Naive thymus-derived CD4-positive, alpha-beta T cell (primary cell): ENCODE measurements at regions of chr1 and their contacts with region 1.

Region 1: GRCh38 chr1:193417945-193418744 is 231.7 kb upstream of the B3GALT2 start:
- DNase-seq: peak in 7 of 9 donors; percentile 16 to 64 (median 47)
- ATAC-seq: peak; percentile 81
- H3K4me3 ChIP-seq: peak overlapping the region; percentile 45
- H3K4me3 Mint-ChIP-seq: peak overlapping the region; percentile 68 to 93 (median 87)
- H3K27ac ChIP-seq: peak overlapping the region; percentile 58
- H3K27ac Mint-ChIP-seq: peak overlapping the region; percentile 88 to 95 (median 91)
- H3K4me1 ChIP-seq: peaks cover 16 to 19% of the 10 kb centered on the region in 2 donors
- H3K4me1 Mint-ChIP-seq: peaks cover 15 to 57% (median 46%) of the 10 kb centered on the region in 7 donors
- H3K27me3 ChIP-seq: no peaks in the 10 kb centered on the region
- H3K27me3 Mint-ChIP-seq: no peaks in the 10 kb centered on the region

Region 2: DNA sequence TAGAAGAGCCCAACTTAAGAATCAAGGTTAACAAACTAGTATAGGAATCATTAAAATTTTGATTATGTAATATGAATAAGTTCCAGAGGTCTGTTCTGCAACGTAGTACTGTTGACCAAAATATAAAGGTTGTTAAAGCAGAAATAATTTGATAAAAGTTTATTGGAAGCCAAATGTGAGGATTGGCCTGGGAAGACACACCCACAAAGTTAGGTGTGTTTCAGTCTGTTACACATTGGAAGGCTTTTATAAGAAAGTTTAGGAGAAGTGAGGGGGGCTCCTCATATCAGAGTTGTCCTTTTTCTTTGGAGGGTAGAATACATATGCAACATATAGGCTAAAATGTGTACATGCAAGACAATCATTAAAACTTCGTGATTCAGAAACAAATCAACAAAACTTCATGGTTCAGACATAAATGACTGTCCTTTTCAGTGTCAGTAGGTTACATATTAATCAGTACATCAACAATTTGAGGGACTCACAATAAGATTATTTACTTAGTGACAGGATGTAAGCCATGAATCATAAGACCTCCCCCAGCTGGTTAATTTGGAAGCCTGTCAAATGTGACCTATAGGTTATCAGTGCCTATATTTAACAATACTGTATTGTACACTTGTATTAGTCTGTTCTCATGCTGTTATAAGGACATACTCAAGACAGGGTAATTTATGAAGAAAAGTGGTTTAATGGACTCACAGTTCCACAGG is 13.3 kb after region 1 on chr1:
- CTCF ChIA-PET with region 1: no interaction called
- POLR2A ChIA-PET with region 1: no interaction called
- intact Hi-C with region 1: loop called in 1 of 2 experiments (anchors 1 kb)
- DNase-seq: no peak
- ATAC-seq: no peak
- H3K4me3 ChIP-seq: no peak overlapping the region
- H3K4me3 Mint-ChIP-seq: no peak overlapping the region
- H3K27ac ChIP-seq: no peak overlapping the region
- H3K27ac Mint-ChIP-seq: peak overlapping the region in 1 of 9 donors; percentile 6
- H3K4me1 ChIP-seq: no peaks in the 10 kb centered on the region
- H3K4me1 Mint-ChIP-seq: peaks cover 0 to 22% (median 9%) of the 10 kb centered on the region in 7 donors
- H3K27me3 ChIP-seq: no peaks in the 10 kb centered on the region
- H3K27me3 Mint-ChIP-seq: no peaks in the 10 kb centered on the region

Region 3: DNA sequence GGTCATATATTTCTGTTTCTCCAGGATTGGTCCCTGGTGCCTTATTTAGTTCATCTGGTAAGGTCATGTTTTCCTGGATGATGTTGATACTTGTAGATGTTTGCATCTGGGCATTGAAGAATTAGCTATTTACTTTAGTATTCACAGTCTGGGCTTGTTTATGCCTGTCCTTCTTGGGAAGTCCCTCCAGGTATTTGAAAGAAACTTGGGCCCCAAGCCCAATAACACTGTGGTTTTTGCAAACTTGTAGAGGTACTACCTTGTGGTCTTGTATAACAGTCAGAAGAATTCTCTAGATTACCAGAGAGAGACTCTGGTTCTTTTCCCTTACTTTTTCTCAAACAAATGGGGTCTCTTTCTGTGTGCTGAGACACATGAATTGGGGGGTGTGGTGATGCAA is 19.6 kb after region 1 on chr1:
- CTCF ChIA-PET with region 1: no interaction called
- POLR2A ChIA-PET with region 1: no interaction called
- intact Hi-C with region 1: loop called (anchors 1 to 2 kb)
- DNase-seq: no peak
- ATAC-seq: peak; percentile 31
- H3K4me3 ChIP-seq: no peak overlapping the region
- H3K4me3 Mint-ChIP-seq: peak overlapping the region in 1 of 10 donors; percentile 72
- H3K27ac ChIP-seq: no peak overlapping the region
- H3K27ac Mint-ChIP-seq: peak overlapping the region in 3 of 9 donors; percentile 36 to 92 (median 60)
- H3K4me1 ChIP-seq: peaks cover 5 to 12% of the 10 kb centered on the region in 2 donors
- H3K4me1 Mint-ChIP-seq: peaks cover 0 to 46% (median 12%) of the 10 kb centered on the region in 7 donors
- H3K27me3 ChIP-seq: no peaks in the 10 kb centered on the region
- H3K27me3 Mint-ChIP-seq: no peaks in the 10 kb centered on the region

Region 4: DNA sequence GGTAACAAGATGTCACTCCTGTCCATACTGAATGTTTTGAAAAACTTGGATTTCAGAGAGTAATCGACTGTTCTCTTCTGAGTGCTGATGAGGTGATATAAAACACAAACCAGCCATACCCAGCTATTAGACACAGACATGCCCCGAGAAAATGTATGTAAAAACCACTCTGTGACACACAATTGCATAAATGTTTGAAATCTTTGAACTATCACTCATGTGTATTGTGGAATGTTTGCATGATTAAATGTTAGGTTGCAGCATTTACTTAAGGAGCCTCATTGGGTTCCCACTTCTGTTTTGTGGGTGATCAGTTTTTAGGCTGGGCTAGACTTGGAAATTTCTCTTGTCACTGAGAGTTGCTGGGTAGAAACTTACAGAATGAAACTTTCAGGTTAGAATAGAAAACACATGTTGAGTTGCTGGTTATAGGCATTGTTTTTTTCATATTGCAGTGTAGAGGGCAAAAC is 38.7 kb after region 1 on chr1:
- CTCF ChIA-PET with region 1: no interaction called
- POLR2A ChIA-PET with region 1: no interaction called
- intact Hi-C with region 1: loop called in 1 of 2 experiments (anchors 2 kb)
- DNase-seq: no peak
- ATAC-seq: no peak
- H3K4me3 ChIP-seq: no peak overlapping the region
- H3K4me3 Mint-ChIP-seq: no peak overlapping the region
- H3K27ac ChIP-seq: no peak overlapping the region
- H3K27ac Mint-ChIP-seq: no peak overlapping the region
- H3K4me1 ChIP-seq: peaks cover 6 to 15% of the 10 kb centered on the region in 2 donors
- H3K4me1 Mint-ChIP-seq: peaks cover 11 to 23% (median 12%) of the 10 kb centered on the region in 7 donors
- H3K27me3 ChIP-seq: no peaks in the 10 kb centered on the region
- H3K27me3 Mint-ChIP-seq: no peaks in the 10 kb centered on the region

Region 5: GRCh38 chr1:193569096-193569982 is 151.2 kb after region 1 on chr1:
- CTCF ChIA-PET with region 1: no interaction called
- POLR2A ChIA-PET with region 1: no interaction called
- intact Hi-C with region 1: loop called in 1 of 2 experiments (anchors 1 kb)
- DNase-seq: peak in 4 of 9 donors; percentile 2 to 31 (median 16)
- ATAC-seq: peak; percentile 67
- H3K4me3 ChIP-seq: no peak overlapping the region
- H3K4me3 Mint-ChIP-seq: peak overlapping the region in 5 of 10 donors; percentile 4 to 63 (median 23)
- H3K27ac ChIP-seq: no peak overlapping the region
- H3K27ac Mint-ChIP-seq: peak overlapping the region in 6 of 9 donors; percentile 34 to 89 (median 78)
- H3K4me1 ChIP-seq: peaks cover 4 to 16% of the 10 kb centered on the region in 2 donors
- H3K4me1 Mint-ChIP-seq: peaks cover 12 to 24% (median 19%) of the 10 kb centered on the region in 7 donors
- H3K27me3 ChIP-seq: no peaks in the 10 kb centered on the region
- H3K27me3 Mint-ChIP-seq: no peaks in the 10 kb centered on the region

Region 6: GRCh38 chr1:193589597-193590040 is 171.5 kb after region 1 on chr1:
- CTCF ChIA-PET with region 1: no interaction called
- POLR2A ChIA-PET with region 1: interaction called, 3 read pairs
- intact Hi-C with region 1: loop called in 1 of 2 experiments (anchors 5 kb)
- DNase-seq: no peak
- ATAC-seq: no peak
- H3K4me3 ChIP-seq: no peak overlapping the region
- H3K4me3 Mint-ChIP-seq: no peak overlapping the region
- H3K27ac ChIP-seq: no peak overlapping the region
- H3K27ac Mint-ChIP-seq: peak overlapping the region in 1 of 9 donors; percentile 26
- H3K4me1 ChIP-seq: no peaks in the 10 kb centered on the region
- H3K4me1 Mint-ChIP-seq: peaks cover 5 to 34% (median 11%) of the 10 kb centered on the region in 7 donors
- H3K27me3 ChIP-seq: no peaks in the 10 kb centered on the region
- H3K27me3 Mint-ChIP-seq: no peaks in the 10 kb centered on the region

Region 7: GRCh38 chr1:194052514-194053333 is 634.6 kb after region 1 on chr1:
- CTCF ChIA-PET with region 1: no interaction called
- POLR2A ChIA-PET with region 1: interaction called, 3 read pairs
- intact Hi-C with region 1: loop called (anchors 5 kb)
- DNase-seq: peak in 6 of 9 donors; percentile 21 to 54 (median 44)
- ATAC-seq: peak; percentile 56
- H3K4me3 ChIP-seq: peak overlapping the region; percentile 9
- H3K4me3 Mint-ChIP-seq: peak overlapping the region; percentile 41 to 83 (median 71)
- H3K27ac ChIP-seq: peak overlapping the region; percentile 63
- H3K27ac Mint-ChIP-seq: peak overlapping the region; percentile 93 to 98 (median 96)
- H3K4me1 ChIP-seq: peaks cover 7 to 61% of the 10 kb centered on the region in 2 donors
- H3K4me1 Mint-ChIP-seq: peaks cover 43 to 82% (median 69%) of the 10 kb centered on the region in 7 donors
- H3K27me3 ChIP-seq: no peaks in the 10 kb centered on the region
- H3K27me3 Mint-ChIP-seq: no peaks in the 10 kb centered on the region